Activated CD4-positive, alpha-beta T cell treated with anti-CD3 and anti-CD28 coated beads, Interleukin-2, amount 10 ng/mL, durations not matched to agents 24 days and 14 days (primary cell): ENCODE measurements at regions of chr1 and their contacts with region 1.

Region 1: GRCh38 chr1:21782868-21783678 is at the start of gene USP48:
- DNase-seq: peak; percentile 99
- H3K4me3 Mint-ChIP-seq: peak within 1 kb of the TSS; percentile 94
- H3K27ac Mint-ChIP-seq: peak within 1 kb of the TSS; percentile 100
- H3K4me1 Mint-ChIP-seq: peaks cover 18% of the 10 kb centered on the region
- H3K27me3 Mint-ChIP-seq: peaks cover 4% of the 10 kb centered on the region
- total RNA-seq, gene USP48: 92.0 and 92.7 TPM in 2 replicates

Region 2: GRCh38 chr1:21659099-21659923 is 123.8 kb before region 1 on chr1:
- intact Hi-C with region 1: loop called (anchors 5 kb)
- DNase-seq: peak; percentile 96
- H3K4me3 Mint-ChIP-seq: peak overlapping the region; percentile 72
- H3K27ac Mint-ChIP-seq: no peak overlapping the region
- H3K4me1 Mint-ChIP-seq: peaks cover 8% of the 10 kb centered on the region
- H3K27me3 Mint-ChIP-seq: peaks cover 27% of the 10 kb centered on the region

Region 3: DNA sequence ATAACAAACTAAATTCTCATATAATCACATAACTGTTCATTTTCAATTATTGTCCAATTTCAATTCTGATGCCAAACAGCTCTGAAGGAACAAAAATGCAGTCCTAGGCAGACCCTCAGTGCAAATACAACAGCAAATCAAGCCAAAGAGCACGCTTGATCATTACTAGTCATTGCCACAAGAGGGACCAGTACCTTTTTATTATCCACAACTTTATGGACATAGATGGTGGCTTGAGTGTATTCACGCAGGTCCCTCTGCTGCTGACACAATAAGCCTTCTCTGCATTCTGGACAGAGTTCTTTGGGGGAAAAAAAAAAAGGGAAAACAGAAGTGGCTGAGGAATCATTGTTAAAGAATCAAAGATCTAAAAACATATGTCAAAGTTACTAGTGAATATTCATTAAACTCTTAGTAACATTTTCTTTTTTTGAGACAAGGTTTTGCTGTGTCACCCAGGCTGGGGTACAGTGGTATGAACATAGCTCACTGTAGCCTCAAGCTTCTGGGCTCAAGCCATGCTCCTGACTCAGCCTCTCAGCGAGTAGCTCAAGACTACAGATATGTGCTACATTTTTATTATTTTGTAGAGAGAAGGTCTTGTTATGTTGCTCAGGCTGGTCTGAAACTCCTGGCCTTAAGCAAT is 79.6 kb before region 1 on chr1:
- intact Hi-C with region 1: loop called (anchors 5 kb)
- DNase-seq: peak; percentile 60
- H3K4me3 Mint-ChIP-seq: no peak overlapping the region
- H3K27ac Mint-ChIP-seq: peak overlapping the region; percentile 59
- H3K4me1 Mint-ChIP-seq: peaks cover 20% of the 10 kb centered on the region
- H3K27me3 Mint-ChIP-seq: no peaks in the 10 kb centered on the region

Region 4: GRCh38 chr1:21741206-21741605 is 41.9 kb before region 1 on chr1:
- intact Hi-C with region 1: loop called (anchors 2 kb)
- DNase-seq: no peak
- H3K4me3 Mint-ChIP-seq: no peak overlapping the region
- H3K27ac Mint-ChIP-seq: peak overlapping the region; percentile 9
- H3K4me1 Mint-ChIP-seq: peaks cover 16% of the 10 kb centered on the region
- H3K27me3 Mint-ChIP-seq: no peaks in the 10 kb centered on the region

Region 5: GRCh38 chr1:21766210-21766609 is 16.9 kb before region 1 on chr1:
- intact Hi-C with region 1: loop called (anchors 1 kb)
- DNase-seq: no peak
- H3K4me3 Mint-ChIP-seq: no peak overlapping the region
- H3K27ac Mint-ChIP-seq: peak overlapping the region; percentile 63
- H3K4me1 Mint-ChIP-seq: peaks cover 38% of the 10 kb centered on the region
- H3K27me3 Mint-ChIP-seq: no peaks in the 10 kb centered on the region

Region 6: GRCh38 chr1:22025368-22026155 is 242.5 kb after region 1 on chr1:
- intact Hi-C with region 1: loop called (anchors 2 kb)
- DNase-seq: peak; percentile 97
- H3K4me3 Mint-ChIP-seq: peak overlapping the region; percentile 90
- H3K27ac Mint-ChIP-seq: peak overlapping the region; percentile 100
- H3K4me1 Mint-ChIP-seq: peaks cover 48% of the 10 kb centered on the region
- H3K27me3 Mint-ChIP-seq: no peaks in the 10 kb centered on the region

Region 7: GRCh38 chr1:22052115-22053016 is 269.3 kb after region 1 on chr1 and contains the start of gene CDC42:
- intact Hi-C with region 1: loop called (anchors 1 kb)
- DNase-seq: peak; percentile 99
- H3K4me3 Mint-ChIP-seq: peak within 1 kb of the TSS; percentile 98
- H3K27ac Mint-ChIP-seq: peak within 1 kb of the TSS; percentile 98
- H3K4me1 Mint-ChIP-seq: peaks cover 54% of the 10 kb centered on the region
- H3K27me3 Mint-ChIP-seq: no peaks in the 10 kb centered on the region
- total RNA-seq, gene CDC42: 307 and 321 TPM in 2 replicates